Thyroid gland (tissue), 4 donors: ENCODE measurements at regions of chr5 and their contacts with region 1.

Region 1: DNA sequence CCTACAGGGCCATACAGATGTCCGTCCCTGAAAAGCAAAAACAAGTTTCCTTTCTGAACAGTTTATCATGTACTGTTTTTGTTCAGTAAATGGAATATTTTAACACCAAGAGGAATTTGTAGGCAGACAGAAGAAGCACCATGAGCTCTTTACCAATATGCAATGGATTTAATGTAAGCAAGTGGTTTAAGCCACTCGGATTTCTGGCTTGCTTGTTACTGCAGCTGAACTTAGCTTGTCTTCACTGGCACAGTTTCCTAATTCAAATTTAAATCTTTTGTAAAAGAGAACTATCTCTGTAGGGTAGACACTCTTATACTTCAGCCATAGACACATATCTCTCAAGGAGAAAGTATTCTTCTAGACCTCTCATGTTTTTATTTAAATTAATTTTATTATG is 12.7 kb upstream of the EBF1 start:
- DNase-seq: no peak
- H3K4me3 ChIP-seq: no peak overlapping the region
- H3K27ac ChIP-seq: no peak overlapping the region
- H3K4me1 ChIP-seq: no peaks in the 10 kb centered on the region
- H3K27me3 ChIP-seq: no peaks in the 10 kb centered on the region
- CTCF ChIP-seq: no peak
- POLR2A ChIP-seq: no peak

Region 2: DNA sequence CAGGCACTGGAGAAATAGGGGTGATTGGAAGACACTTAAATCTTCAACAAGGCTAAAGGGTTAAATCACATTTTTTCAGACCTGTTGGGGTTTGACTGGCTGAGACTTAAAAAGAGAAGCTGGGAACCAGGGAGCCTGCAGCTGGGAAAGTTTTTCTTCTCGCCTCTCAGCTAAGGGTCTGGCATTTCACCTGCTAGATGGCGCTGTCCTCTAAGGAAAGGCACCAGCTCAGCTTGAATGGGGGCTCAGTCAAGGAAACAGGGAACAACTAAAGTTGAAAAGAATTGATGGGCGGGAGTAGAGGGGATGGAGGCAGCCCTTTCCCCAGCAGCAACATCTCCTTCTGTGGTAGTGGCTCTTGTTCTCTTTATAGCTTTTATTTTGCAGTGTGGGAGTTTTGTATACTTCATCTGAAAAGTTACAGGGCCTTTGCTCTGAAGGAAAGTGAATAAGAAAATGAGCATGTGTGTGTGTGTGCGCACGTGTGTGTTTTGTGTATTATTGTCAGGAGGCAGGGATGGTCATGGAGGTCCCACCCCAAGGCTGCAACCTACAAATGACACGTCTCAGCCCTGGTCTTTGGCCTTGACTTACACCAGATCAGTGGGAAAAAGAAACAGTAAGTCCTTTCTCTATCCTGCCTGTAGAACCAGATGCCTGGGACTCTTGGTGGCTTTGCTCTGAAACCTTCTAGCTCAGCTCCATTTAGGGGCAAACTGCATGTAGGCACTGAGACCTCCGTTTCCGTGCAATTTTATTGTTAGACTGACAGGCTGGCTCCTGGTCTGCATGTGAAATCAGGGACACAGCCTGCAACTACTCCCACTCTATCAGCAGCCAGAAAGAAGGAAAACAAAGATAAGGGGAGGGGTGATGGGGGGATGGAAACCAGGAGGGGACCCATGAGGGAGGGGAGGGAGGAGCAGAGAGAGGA is 937.3 kb before region 1 on chr5:
- intact Hi-C with region 1: loop called (anchors 5 kb)
- DNase-seq: peak; percentile 63 to 72
- H3K4me3 ChIP-seq: no peak overlapping the region
- H3K27ac ChIP-seq: no peak overlapping the region
- H3K4me1 ChIP-seq: no peaks in the 10 kb centered on the region
- H3K27me3 ChIP-seq: no peaks in the 10 kb centered on the region
- CTCF ChIP-seq: peak; percentile 33 to 87 (median 63)
- POLR2A ChIP-seq: no peak